ENCODE measurements at regions of chr5 and their contacts with region 1.

Region 1: GRCh38 chr5:73370640-73371583 is 77.7 kb downstream of the FOXD1 start:
- DNase-seq: no peak

Region 2: DNA sequence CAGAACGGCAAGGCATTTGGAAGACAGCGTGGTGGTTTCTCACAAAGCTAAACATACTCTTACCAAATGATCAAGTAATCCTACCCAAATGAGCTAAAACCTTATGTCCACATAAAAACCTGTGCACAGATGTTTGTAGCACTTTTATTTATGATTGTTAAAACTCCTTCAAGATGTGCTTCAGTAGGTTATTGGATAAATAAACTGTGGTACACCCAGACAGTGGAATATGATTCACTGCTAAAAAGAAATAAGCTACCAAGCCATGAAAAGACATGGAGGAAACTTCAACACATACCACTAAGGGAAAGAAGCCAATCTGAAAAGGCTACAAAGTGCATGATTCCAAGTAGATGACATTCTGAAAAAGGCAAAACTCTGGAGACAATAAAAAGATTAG is 16.5 kb before region 1 on chr5:
- intact Hi-C with region 1: loop called in 1 of 2 experiments (anchors 1 kb)
- DNase-seq: no peak

Region 3: DNA sequence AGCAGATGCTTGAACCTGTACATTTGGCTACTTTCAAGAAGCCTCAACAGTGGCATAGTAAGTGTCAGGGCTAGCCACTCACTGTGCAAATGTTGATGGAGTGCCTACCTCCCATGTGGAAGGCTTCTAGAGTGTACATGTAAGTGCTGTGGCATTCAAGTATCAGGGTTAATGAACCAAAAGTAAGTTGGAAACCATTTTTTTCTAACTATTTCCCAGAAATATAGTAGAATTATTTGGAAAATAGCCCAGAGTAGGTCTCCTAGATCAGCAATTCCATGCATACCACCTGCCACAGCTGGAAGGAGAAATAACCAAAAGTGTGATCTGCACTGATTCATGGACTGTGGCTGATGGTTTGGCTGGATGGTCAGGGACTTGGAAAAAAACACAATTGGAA is 24.3 kb after region 1 on chr5:
- intact Hi-C with region 1: no loop called
- DNase-seq: no peak

Measured in posterior vena cava (tissue), 2 donors.